ENCODE measurements at regions of chr17 and their contacts with region 1.

Region 1: DNA sequence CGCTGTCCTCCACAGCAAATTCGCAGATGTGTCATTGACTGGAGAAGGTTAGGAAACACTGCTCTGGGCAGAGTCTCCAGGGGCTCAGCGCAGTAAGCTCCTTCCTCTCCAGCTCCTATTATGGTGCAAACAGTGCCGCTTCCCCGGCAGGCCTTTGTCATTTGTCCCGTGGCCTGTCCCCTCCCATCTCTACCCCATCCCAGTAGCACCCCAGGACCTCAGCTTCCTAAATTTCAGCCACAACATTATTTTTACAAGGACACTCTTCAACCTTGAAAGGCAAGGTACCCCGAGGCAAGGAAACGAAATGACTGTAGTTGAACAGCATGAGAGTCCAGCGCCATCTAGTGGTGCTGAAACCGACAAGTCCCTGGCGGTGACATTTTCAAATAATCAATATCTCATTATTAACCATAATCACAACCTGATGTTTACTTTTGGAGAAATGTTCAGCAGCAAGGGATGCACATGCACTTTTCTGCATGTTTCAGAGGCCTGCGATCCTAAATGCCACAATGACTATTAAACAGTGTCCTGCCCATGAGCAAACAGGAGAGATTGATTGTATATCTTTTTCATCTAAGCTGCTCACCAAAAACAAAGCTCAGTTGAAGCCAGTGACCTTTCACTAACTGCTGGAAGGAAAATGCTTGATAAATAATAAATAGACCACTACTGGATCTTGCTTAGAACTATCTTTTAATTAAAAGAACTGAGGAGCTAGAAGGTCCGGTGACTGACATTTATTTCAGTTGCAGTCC is 16.5 kb downstream of the MRPS23 start:
- DNase-seq: peak; percentile 65 to 81 (median 74)
- ATAC-seq: peak; percentile 86 to 93
- H3K4me3 ChIP-seq: peak overlapping the region; percentile 48
- H3K27ac ChIP-seq: peak overlapping the region; percentile 94
- H3K4me1 ChIP-seq: peaks cover 8% of the 10 kb centered on the region
- H3K27me3 ChIP-seq: no peaks in the 10 kb centered on the region

Region 2: DNA sequence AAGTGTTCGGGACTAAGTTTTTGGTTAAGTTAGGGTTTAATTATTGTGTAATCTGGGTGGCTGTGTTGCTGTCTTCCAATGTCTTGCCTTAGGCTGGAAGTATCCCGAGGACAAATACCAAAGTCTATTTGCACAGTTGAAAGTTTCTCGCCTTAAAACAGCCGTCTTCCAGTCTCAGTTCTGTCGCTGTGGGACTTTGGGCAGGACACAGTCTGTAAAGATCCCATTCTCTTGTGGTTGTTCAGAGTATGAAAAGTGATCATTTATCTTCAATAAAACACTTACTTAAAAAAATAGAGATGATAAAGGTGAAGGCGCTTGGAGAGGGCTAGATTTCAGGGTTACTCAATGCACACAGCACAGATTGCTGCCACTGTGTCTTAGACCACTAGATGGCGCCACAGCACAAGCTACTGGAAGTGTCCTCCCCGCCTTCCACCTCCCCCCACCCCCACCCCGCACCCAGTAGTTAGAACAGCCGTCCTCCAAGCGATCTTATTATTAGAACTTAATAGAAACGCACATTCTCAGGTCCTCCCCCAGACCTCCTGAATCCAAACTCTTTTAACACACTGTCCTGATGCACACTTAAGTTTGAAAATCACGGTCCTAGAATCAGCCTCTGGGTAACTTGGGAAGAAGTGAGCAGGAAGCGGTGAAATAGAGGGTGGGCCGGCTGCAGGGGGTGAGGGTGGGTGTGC is 702.4 kb before region 1 on chr17:
- intact Hi-C with region 1: loop called in 3 of 4 experiments (anchors 5 to 10 kb)
- DNase-seq: peak; percentile 81 to 94 (median 88)
- ATAC-seq: peak; percentile 91 to 94
- H3K4me3 ChIP-seq: no peak overlapping the region
- H3K27ac ChIP-seq: no peak overlapping the region
- H3K4me1 ChIP-seq: no peaks in the 10 kb centered on the region
- H3K27me3 ChIP-seq: no peaks in the 10 kb centered on the region

Region 3: GRCh38 chr17:57255776-57256681 is 577.3 kb before region 1 on chr17 and contains the start of gene MSI2:
- intact Hi-C with region 1: loop called in 1 of 4 experiments (anchors 10 kb)
- DNase-seq: peak; percentile 97 to 98 (median 98)
- ATAC-seq: peak; percentile 93
- H3K4me3 ChIP-seq: peak within 1 kb of the TSS; percentile 99
- H3K27ac ChIP-seq: peak within 1 kb of the TSS; percentile 88
- H3K4me1 ChIP-seq: peaks cover 2% of the 10 kb centered on the region
- H3K27me3 ChIP-seq: no peaks in the 10 kb centered on the region
- total RNA-seq, gene MSI2: 105 to 113 (median 109) TPM

Region 4: GRCh38 chr17:57739402-57740392 is 93.7 kb before region 1 on chr17:
- intact Hi-C with region 1: no loop called
- DNase-seq: no peak
- ATAC-seq: peak; percentile 55 to 63
- H3K4me3 ChIP-seq: no peak overlapping the region
- H3K27ac ChIP-seq: no peak overlapping the region
- H3K4me1 ChIP-seq: no peaks in the 10 kb centered on the region
- H3K27me3 ChIP-seq: no peaks in the 10 kb centered on the region

Region 5: DNA sequence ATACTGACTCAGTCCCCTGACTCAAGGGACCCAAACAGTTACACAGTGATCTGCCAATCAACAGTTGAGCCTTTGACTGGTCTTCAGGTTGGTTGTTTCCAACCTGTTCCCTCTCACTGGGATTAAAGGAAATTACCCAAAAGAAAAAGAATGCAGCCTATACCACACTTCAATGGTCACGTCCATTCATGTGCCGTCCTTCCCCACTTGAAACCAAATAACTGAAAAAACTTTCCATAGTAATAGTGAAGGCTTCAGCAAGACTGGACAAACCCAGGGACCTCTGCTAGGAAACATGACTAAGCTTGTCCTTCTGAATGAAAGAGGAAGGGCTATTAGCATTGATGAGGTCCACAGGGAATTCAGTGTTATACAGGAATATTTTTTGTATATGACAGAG is 14.1 kb before region 1 on chr17:
- intact Hi-C with region 1: no loop called
- DNase-seq: no peak
- ATAC-seq: no peak
- H3K4me3 ChIP-seq: no peak overlapping the region
- H3K27ac ChIP-seq: no peak overlapping the region
- H3K4me1 ChIP-seq: no peaks in the 10 kb centered on the region
- H3K27me3 ChIP-seq: no peaks in the 10 kb centered on the region

Region 6: DNA sequence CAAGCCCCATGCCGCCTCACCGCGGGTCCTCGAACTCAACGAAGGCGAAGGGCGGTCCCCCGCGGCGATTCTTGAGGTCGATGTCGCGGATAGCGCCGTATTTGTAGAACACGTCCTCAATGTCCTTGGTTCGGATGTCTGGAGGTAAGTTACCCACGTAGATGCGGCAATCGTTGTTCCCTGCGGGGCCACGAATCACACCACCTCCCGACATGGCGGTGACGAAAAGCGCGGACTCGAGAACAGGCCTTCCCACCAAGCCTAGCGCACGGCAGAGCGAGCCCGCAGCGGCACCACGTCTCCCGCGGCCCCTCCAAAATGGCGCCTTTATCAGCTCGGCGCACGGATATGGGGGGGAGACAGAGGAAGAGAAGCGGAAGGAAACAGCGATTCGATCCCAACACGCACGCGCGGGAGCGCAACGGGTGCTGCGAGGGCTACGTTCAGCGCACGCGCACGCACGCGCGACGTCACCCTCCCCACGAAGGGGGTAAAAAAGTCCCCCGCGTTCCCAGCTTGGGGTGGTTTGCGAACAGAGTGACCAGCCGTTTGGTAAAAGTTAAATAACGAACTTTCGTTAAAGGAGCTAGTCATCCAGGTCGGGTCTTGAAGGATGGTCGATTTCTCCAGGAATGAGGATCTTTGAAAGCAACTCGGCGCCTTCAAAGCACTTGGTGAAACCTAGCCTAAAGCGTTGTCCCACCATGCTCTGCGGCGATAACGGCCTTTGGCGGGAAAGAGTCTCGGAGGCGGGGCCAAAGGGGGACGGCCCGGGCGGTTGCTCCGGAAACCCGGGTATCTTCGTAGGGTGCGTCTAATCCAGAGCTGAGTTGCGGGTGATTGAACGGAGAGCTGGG is 173.8 kb after region 1 on chr17 and contains the start of gene SRSF1:
- intact Hi-C with region 1: no loop called
- DNase-seq: peak; percentile 98 to 99 (median 99)
- ATAC-seq: peak; percentile 97
- H3K4me3 ChIP-seq: peak within 1 kb of the TSS; percentile 78
- H3K27ac ChIP-seq: peak within 1 kb of the TSS; percentile 94
- H3K4me1 ChIP-seq: no peaks in the 10 kb centered on the region
- H3K27me3 ChIP-seq: no peaks in the 10 kb centered on the region
- total RNA-seq, gene SRSF1: 97.9 to 132 (median 126) TPM